ENCODE measurements at regions of chr20 and their contacts with region 1.

Region 1: GRCh38 chr20:35085477-35086225 is 7.0 kb downstream of the TRPC4AP start:
- DNase-seq: peak; percentile 35
- ATAC-seq: peak; percentile 90
- H3K4me3 Mint-ChIP-seq: no peak overlapping the region
- H3K27ac Mint-ChIP-seq: peak overlapping the region; percentile 80
- H3K4me1 Mint-ChIP-seq: peaks cover 51% of the 10 kb centered on the region
- H3K27me3 Mint-ChIP-seq: no peaks in the 10 kb centered on the region

Region 2: GRCh38 chr20:34129518-34130162 is 956.0 kb before region 1 on chr20:
- CTCF ChIA-PET with region 1: no interaction called
- POLR2A ChIA-PET with region 1: no interaction called
- intact Hi-C with region 1: no loop called
- DNase-seq: peak; percentile 68
- ATAC-seq: peak; percentile 90
- H3K4me3 Mint-ChIP-seq: no peak overlapping the region
- H3K27ac Mint-ChIP-seq: no peak overlapping the region
- H3K4me1 Mint-ChIP-seq: peaks cover 8% of the 10 kb centered on the region
- H3K27me3 Mint-ChIP-seq: peaks cover 5% of the 10 kb centered on the region

Region 3: GRCh38 chr20:35063168-35063567 is 22.5 kb before region 1 on chr20:
- CTCF ChIA-PET with region 1: interaction called, 3 read pairs
- POLR2A ChIA-PET with region 1: no interaction called
- intact Hi-C with region 1: loop called (anchors 2 to 5 kb)
- DNase-seq: no peak
- ATAC-seq: no peak
- H3K4me3 Mint-ChIP-seq: no peak overlapping the region
- H3K27ac Mint-ChIP-seq: no peak overlapping the region
- H3K4me1 Mint-ChIP-seq: peaks cover 68% of the 10 kb centered on the region
- H3K27me3 Mint-ChIP-seq: no peaks in the 10 kb centered on the region